ENCODE measurements at regions of chr18 and their contacts with region 1.

Region 1: GRCh38 chr18:62723455-62724281 is 8.3 kb downstream of the PHLPP1 start:
- DNase-seq: no peak
- ATAC-seq: no peak
- H3K4me3 ChIP-seq: no peak overlapping the region
- H3K27ac ChIP-seq: no peak overlapping the region
- H3K4me1 ChIP-seq: peaks cover 13% of the 10 kb centered on the region; the same call in 1 of the 2 replicates
- H3K27me3 ChIP-seq: no peaks in the 10 kb centered on the region
- CTCF ChIP-seq: no peak

Region 2: DNA sequence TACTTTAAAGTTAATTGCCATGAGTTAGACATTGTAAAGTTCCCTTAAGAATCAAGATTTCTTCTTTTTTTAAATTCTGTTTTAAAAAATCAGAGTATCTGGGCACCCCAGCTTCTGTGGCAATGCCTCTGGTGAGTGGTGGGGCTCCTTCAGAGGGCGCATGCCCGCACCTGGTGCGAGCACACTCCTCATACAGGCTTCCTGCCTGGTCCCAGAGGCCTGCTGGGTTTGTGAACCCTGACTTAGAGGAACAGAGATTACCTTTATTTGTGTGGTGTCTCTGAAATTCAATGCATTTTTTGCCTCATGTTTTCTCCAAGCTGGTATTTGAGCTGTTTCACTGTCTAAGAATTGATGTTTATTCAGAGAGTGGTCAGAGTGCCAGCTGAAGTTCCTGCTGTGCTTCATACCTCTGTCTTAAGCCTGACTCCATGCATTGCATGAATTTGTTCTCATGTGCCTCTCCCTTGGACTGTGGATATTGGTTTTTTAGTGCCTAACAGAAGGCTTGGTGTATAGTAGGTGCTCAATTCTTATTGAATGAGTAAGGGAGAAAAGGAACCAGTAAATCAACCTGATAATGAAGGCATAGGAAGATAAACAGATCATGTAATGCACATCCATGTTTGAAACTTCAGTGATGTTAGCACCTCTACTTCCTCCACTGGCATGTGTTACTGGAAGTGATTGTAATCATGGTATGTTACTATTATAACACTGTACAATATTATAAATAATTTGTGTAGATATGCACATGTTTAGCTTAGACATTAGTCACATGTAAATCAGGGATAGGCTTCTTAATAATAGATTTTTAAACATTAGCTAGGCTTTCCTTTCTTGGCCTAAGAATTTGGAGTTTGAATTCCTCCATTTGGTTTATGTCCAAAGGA is 20.7 kb after region 1 on chr18:
- CTCF ChIA-PET with region 1: no interaction called
- POLR2A ChIA-PET with region 1: no interaction called
- intact Hi-C with region 1: loop called (anchors 2 kb)
- DNase-seq: peak; percentile 5
- ATAC-seq: peak; percentile 57
- H3K4me3 ChIP-seq: no peak overlapping the region
- H3K27ac ChIP-seq: no peak overlapping the region
- H3K4me1 ChIP-seq: peaks cover 14% of the 10 kb centered on the region
- H3K27me3 ChIP-seq: no peaks in the 10 kb centered on the region
- CTCF ChIP-seq: no peak

Region 3: DNA sequence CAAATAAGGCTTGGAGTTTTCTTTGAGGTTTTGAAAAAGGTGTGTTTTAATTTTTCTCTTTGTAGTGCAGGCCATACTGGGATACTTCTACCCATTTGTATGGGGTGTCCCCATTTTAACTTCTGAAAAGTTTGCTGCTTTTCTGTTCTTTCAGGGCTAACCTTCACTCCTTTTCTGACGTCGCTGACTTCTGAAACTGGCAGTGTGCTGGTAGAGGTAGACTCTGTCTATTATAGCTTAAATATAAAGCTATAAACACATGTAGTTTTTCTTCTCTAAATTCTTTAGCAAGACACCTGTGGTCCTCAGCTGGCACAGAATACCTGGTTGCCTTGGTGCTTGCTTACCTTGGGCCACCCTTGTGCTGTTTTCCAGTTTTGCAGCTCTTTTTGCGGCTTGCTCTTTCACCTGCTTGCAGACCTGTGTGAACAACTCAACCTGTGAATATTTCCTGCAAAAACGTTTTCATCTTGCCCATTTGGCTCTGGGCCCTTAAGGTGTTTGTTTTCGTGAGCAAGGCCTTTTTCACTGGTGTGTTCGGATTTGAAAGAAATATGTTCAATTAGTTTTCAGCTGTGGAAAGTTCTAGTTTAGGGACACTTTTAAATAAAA is 33.8 kb after region 1 on chr18:
- CTCF ChIA-PET with region 1: no interaction called
- POLR2A ChIA-PET with region 1: interaction called, 14 read pairs
- intact Hi-C with region 1: loop called (anchors 1 kb)
- DNase-seq: peak; percentile 93
- ATAC-seq: peak; percentile 65
- H3K4me3 ChIP-seq: peak overlapping the region; percentile 47
- H3K27ac ChIP-seq: peak overlapping the region; percentile 89
- H3K4me1 ChIP-seq: peaks cover 50% of the 10 kb centered on the region
- H3K27me3 ChIP-seq: no peaks in the 10 kb centered on the region
- CTCF ChIP-seq: no peak

Region 4: GRCh38 chr18:62763101-62763521 is 39.4 kb after region 1 on chr18:
- CTCF ChIA-PET with region 1: no interaction called
- POLR2A ChIA-PET with region 1: interaction called, 10 read pairs
- intact Hi-C with region 1: no loop called
- DNase-seq: peak; percentile 56
- ATAC-seq: peak; percentile 52
- H3K4me3 ChIP-seq: no peak overlapping the region
- H3K27ac ChIP-seq: peak overlapping the region; percentile 44
- H3K4me1 ChIP-seq: peaks cover 56% of the 10 kb centered on the region
- H3K27me3 ChIP-seq: no peaks in the 10 kb centered on the region
- CTCF ChIP-seq: no peak

Measured in PC-3 (cell line).